CD4-positive, alpha-beta memory T cell (primary cell): ENCODE measurements at regions of chr15 and their contacts with region 1.

Region 1: DNA sequence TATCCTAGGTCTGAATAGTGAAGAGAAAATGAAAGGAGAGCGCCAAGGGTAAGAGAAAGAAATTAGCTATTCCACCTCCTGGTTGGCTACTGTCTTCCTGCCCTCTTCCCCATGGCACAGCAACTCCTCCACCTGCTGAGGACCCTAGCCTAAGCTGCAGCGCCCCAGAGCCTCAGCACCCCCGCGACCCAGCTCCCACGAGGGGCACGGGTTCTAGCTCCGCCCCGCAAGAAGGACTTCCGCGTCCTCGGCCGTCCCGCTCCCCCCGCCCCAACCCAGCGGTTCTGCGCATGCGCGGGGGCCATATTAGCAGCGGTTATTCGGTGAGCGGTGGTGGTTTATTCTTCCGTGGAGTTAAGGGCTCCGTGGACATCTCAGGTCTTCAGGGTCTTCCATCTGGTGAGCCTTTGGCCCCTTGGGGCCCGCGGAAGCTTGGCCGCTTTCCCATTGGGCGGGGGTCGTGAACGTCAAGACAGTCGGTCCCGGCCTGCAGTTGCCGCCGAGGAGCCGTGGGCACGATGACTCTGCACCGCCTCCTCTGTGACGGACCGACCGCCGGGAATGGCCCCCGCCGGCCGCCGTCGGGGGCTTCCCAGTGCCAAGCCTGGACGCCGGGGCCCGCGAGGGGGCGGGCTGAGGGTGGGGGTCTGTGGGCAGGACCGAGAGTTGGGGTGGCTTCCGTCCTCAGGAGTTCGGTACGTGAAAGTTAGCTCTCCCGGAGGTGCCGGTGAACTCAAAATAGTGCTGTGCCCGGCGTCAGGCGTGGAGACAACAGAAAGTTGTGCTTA is at the start of gene PSMA4:
- DNase-seq: peak; percentile 92 to 97 (median 94)
- H3K4me3 ChIP-seq: peak within 1 kb of the TSS; percentile 70 to 96
- H3K4me3 Mint-ChIP-seq: peak within 1 kb of the TSS; percentile 92 to 99 (median 98)
- H3K27ac ChIP-seq: peak within 1 kb of the TSS; percentile 97
- H3K27ac Mint-ChIP-seq: peak within 1 kb of the TSS; percentile 89 to 100 (median 99)
- H3K4me1 ChIP-seq: peaks cover 30% of the 10 kb centered on the region
- H3K4me1 Mint-ChIP-seq: peaks cover 17 to 38% (median 27%) of the 10 kb centered on the region in 4 donors
- H3K27me3 ChIP-seq: no peaks in the 10 kb centered on the region
- H3K27me3 Mint-ChIP-seq: no peaks in the 10 kb centered on the region
- total RNA-seq, gene PSMA4: 89.8 to 91.7 TPM

Region 2: DNA sequence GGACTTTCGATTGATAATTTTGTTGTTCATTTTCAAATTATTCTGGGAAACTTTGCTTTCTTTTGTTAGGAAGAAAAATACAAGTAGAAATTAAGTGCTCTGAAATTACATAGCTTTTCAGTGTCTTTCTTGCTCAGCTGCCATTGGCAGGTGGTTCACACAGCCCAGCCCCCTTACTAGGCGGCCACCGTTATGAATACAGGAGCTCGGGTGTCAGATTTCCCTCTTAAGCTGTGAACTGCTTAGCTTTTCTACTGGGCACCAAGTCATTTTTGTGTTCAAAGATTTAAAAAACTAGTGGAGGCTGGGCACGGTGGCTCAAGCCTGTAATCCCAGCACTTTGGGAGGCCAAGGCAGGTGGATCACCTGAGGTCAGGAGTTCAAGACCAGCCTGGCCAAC is 1064.4 kb before region 1 on chr15:
- CTCF ChIA-PET with region 1: no interaction called
- POLR2A ChIA-PET with region 1: no interaction called
- intact Hi-C with region 1: no loop called
- DNase-seq: no peak
- H3K4me3 ChIP-seq: no peak overlapping the region
- H3K4me3 Mint-ChIP-seq: no peak overlapping the region
- H3K27ac ChIP-seq: no peak overlapping the region
- H3K27ac Mint-ChIP-seq: no peak overlapping the region
- H3K4me1 ChIP-seq: no peaks in the 10 kb centered on the region
- H3K4me1 Mint-ChIP-seq: peaks cover 0 to 3% (median 0%) of the 10 kb centered on the region in 4 donors
- H3K27me3 ChIP-seq: no peaks in the 10 kb centered on the region
- H3K27me3 Mint-ChIP-seq: no peaks in the 10 kb centered on the region

Region 3: GRCh38 chr15:78149068-78149804 is 391.1 kb before region 1 on chr15 and contains the start of gene IDH3A:
- CTCF ChIA-PET with region 1: no interaction called
- POLR2A ChIA-PET with region 1: no interaction called
- intact Hi-C with region 1: loop called (anchors 1 kb)
- DNase-seq: peak; percentile 98 to 99 (median 99)
- H3K4me3 ChIP-seq: peak within 1 kb of the TSS; percentile 63 to 68
- H3K4me3 Mint-ChIP-seq: peak within 1 kb of the TSS; percentile 92 to 99 (median 94)
- H3K27ac ChIP-seq: peak within 1 kb of the TSS; percentile 74
- H3K27ac Mint-ChIP-seq: peak within 1 kb of the TSS; percentile 91 to 96 (median 94)
- H3K4me1 ChIP-seq: peaks cover 26% of the 10 kb centered on the region
- H3K4me1 Mint-ChIP-seq: peaks cover 28 to 46% (median 38%) of the 10 kb centered on the region in 4 donors
- H3K27me3 ChIP-seq: no peaks in the 10 kb centered on the region
- H3K27me3 Mint-ChIP-seq: no peaks in the 10 kb centered on the region
- total RNA-seq, gene IDH3A: 45.1 to 46.8 TPM

Region 4: DNA sequence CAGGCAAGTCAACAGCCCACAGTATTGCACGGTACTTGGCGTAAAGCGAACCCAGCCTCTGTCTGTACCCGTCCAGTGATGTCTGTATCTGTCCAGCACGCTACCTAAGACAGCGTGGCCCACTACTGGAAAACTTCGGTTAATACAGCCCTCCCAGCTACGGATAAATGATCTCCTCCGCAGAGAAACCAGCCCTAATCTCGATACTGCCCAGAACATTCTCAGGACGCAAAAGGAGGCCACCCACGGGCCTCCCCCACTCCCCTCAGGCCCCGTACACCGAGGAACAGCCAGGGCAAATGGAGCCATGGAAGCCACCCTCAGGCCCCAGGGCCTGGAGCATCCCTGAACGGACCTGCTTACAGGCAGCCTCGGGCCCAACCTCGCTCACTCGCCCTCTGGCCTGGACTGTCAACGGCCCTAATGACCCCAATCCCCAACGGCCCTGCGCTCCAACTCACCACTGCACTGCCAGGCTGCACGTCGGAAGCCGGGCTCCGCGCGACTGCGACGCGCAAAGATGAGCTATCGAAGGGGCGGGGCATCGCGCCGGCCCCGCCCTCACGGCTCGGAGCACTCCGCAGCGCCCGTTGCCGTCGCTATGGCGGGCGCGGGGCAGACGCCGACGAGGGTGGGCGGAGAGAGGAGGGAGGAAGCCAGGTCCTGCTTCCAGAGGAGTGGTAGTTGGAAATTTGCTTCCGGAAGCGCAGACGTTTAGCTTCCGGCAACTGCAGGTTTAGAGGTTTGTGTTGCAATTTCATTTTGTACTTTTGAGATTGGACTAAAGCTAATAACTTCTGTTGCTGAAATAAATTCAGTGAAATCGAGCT is 241.0 kb before region 1 on chr15 and contains the start of gene SKIC8:
- CTCF ChIA-PET with region 1: no interaction called
- POLR2A ChIA-PET with region 1: interaction called, 12 read pairs
- intact Hi-C with region 1: no loop called
- DNase-seq: peak; percentile 89 to 91 (median 89)
- H3K4me3 ChIP-seq: peak within 1 kb of the TSS; percentile 70 to 95
- H3K4me3 Mint-ChIP-seq: peak within 1 kb of the TSS; percentile 96 to 99 (median 97)
- H3K27ac ChIP-seq: peak within 1 kb of the TSS; percentile 73
- H3K27ac Mint-ChIP-seq: peak within 1 kb of the TSS; percentile 86 to 99 (median 97)
- H3K4me1 ChIP-seq: peaks cover 21% of the 10 kb centered on the region
- H3K4me1 Mint-ChIP-seq: peaks cover 13 to 31% (median 19%) of the 10 kb centered on the region in 4 donors
- H3K27me3 ChIP-seq: no peaks in the 10 kb centered on the region
- H3K27me3 Mint-ChIP-seq: no peaks in the 10 kb centered on the region
- total RNA-seq, gene SKIC8: 43.6 to 45.5 TPM

Region 5: DNA sequence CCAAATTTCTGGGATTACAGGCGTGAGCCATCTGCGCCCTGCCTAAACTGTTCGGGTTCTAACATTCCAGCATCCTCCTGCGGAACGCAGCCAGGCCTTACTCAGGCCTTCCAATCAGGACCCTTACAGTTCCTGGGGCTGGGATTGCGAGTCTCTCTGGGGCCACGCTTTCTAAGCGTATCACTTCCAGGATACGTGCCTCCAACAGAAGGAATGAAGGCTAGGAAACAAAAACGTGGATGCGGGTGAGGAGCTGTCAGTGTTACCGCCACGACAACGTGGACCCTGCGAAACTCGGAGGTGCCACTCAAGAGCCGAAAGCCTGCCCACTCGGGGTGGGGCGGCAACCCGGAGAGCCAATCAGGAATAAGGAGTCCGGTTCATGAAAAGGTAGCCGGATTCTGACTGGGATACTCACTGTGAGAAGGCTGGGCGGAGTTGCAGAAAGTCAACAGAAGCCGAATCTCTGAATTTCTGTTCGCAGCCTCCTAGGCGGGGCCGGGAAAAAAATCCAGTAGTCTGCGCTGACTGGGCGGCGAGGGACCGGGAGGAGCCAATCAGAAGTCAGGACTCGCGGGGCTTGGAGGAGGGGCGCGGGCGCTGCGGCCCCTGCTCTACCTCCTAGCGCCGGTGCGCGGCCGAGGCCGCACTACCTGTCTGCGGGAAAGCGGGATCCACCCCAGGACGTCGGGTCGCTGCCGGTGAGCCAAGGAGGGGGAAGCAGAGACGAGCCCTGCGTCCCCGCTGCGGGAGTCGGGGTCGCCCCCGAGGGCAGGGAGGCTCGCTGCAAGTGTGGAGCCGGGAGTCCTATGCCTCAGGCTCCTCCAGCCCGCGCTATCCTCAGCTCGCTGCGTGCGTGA is 33.1 kb before region 1 on chr15 and contains the start of gene HYKK:
- CTCF ChIA-PET with region 1: interaction called, 3 read pairs
- POLR2A ChIA-PET with region 1: interaction called, 35 read pairs
- intact Hi-C with region 1: loop called (anchors 1 kb)
- DNase-seq: peak; percentile 60 to 75 (median 63)
- H3K4me3 ChIP-seq: peak within 1 kb of the TSS; percentile 45 to 54
- H3K4me3 Mint-ChIP-seq: peak within 1 kb of the TSS; percentile 89 to 98 (median 94)
- H3K27ac ChIP-seq: peak within 1 kb of the TSS; percentile 48
- H3K27ac Mint-ChIP-seq: peak within 1 kb of the TSS; percentile 31 to 86 (median 80)
- H3K4me1 ChIP-seq: peaks cover 24% of the 10 kb centered on the region
- H3K4me1 Mint-ChIP-seq: peaks cover 14 to 33% (median 23%) of the 10 kb centered on the region in 4 donors
- H3K27me3 ChIP-seq: no peaks in the 10 kb centered on the region
- H3K27me3 Mint-ChIP-seq: peaks cover 0 to 5% of the 10 kb centered on the region in 2 donors
- total RNA-seq, gene HYKK: 4.8 to 5.7 TPM

Region 6: DNA sequence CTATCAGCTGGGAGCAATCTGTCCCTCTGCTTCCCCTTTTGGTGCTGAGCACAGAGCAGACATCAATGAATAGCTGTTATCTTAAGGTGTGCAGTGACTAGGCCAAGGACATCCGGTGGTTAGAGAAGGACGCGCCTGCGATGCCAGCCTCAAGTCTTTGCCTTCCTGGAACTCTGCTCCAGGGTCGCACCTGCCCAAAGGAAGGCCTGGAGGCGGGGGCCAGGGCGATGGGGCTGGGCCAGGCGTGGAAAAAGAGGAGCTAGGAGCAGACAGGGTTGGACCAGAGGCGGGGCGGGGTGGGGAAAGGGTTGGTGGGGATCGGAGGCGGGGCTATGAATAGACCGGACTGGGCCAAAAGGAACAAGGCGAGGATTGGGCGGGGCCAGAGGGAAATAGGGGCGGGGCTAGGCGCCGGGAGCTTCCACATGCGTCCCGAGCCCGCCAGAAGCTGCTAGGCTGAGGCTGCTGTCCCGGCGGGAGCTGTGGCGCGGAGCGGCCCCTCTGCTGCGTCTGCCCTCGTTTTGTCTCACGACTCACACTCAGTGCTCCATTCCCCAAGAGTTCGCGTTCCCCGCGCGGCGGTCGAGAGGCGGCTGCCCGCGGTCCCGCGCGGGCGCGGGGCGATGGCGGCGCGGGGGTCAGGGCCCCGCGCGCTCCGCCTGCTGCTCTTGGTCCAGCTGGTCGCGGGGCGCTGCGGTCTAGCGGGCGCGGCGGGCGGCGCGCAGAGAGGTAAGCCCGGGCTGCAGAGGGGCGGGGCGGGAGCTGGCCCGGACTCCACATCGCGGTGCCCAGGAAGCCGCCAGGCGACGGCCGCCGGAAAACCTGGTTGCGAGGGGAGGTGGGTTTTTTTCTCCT is 25.0 kb after region 1 on chr15 and contains the start of gene CHRNA5:
- CTCF ChIA-PET with region 1: interaction called, 6 read pairs
- POLR2A ChIA-PET with region 1: interaction called, 45 read pairs
- intact Hi-C with region 1: loop called (anchors 2 kb)
- DNase-seq: peak; percentile 28 to 57 (median 36)
- H3K4me3 ChIP-seq: peak within 1 kb of the TSS; percentile 49 to 57
- H3K4me3 Mint-ChIP-seq: peak within 1 kb of the TSS; percentile 87 to 98 (median 90)
- H3K27ac ChIP-seq: peak within 1 kb of the TSS; percentile 30
- H3K27ac Mint-ChIP-seq: peak within 1 kb of the TSS; percentile 14 to 88 (median 73)
- H3K4me1 ChIP-seq: peaks cover 18% of the 10 kb centered on the region
- H3K4me1 Mint-ChIP-seq: peaks cover 7 to 24% (median 17%) of the 10 kb centered on the region in 4 donors
- H3K27me3 ChIP-seq: peaks cover 8% of the 10 kb centered on the region
- H3K27me3 Mint-ChIP-seq: peaks cover 2 to 10% of the 10 kb centered on the region in 2 donors
- total RNA-seq, gene CHRNA5: 1.3 to 1.6 TPM